ENCODE measurements at regions of chr19 and their contacts with region 1.

Region 1: DNA sequence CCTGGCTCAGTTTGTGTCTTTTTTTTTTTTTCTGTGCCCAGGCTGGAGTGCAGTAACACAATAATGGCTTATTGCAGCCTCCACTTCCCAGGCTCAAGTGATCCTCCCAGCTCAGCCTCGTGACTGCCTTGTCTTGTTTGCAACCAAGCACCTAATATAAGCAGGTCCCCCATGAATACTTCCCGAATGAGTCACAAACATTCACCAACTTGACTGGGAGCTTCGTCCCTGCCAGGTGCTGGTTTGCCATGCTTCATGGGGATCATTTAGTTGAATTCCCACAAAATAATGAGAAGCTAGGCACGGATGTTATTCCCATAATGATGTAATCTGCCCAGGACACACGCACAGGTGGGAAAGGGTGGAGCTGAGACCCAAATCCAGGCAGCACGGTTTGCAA is 176.5 kb downstream of the CACNA1A start:
- DNase-seq: no peak
- H3K4me3 Mint-ChIP-seq: no peak overlapping the region
- H3K27ac Mint-ChIP-seq: no peak overlapping the region
- H3K4me1 Mint-ChIP-seq: no peaks in the 10 kb centered on the region
- H3K27me3 Mint-ChIP-seq: peaks cover 43% of the 10 kb centered on the region
- CTCF ChIP-seq: no peak

Region 2: GRCh38 chr19:13132471-13133180 is 197.1 kb before region 1 on chr19:
- CTCF ChIA-PET with region 1: no interaction called
- intact Hi-C with region 1: no loop called
- DNase-seq: no peak
- H3K4me3 Mint-ChIP-seq: no peak overlapping the region
- H3K27ac Mint-ChIP-seq: no peak overlapping the region
- H3K4me1 Mint-ChIP-seq: peaks cover 5% of the 10 kb centered on the region
- H3K27me3 Mint-ChIP-seq: no peaks in the 10 kb centered on the region
- CTCF ChIP-seq: no peak

Region 3: DNA sequence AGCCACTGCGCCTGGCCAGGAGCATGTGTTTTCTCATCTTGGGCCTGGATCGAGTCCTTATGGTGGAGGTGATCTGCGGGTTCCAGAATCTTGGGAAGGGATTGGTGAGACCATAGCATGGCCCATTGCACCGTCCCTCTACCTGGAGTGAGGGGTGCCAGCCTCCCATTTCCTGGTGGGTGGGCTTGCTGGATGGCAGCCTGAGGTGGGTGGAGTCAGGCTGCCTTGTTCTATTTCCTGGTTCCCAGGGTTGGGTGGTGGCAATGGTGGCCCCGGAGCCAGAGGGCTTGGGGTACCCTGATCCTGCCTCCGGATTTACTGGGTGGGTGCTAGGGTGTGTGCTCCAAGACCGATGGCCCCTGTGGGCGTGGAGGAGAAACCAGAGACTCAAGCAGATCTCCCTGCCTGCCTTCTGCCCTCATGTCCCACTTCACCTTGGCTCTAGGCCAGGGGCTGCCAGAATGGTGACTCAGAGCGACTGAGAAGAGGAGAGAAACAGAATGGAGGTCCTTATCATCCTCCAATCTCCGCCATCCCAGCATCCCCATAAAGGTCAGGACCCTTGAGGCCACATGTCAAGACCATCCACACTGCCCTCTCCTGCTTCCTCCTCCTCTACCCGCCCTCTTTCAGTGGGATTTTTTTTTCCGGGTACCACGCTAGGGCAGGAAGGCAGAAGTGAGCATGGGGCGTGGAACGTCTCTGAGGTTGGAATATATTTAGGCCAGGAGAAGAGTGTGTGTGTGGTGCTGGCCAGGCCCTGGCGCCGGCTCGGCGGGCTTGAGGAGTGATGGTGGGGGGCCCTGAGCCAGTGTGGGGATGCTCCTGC is 157.5 kb before region 1 on chr19:
- CTCF ChIA-PET with region 1: no interaction called
- intact Hi-C with region 1: no loop called
- DNase-seq: peak; percentile 84
- H3K4me3 Mint-ChIP-seq: no peak overlapping the region
- H3K27ac Mint-ChIP-seq: peak overlapping the region; percentile 73
- H3K4me1 Mint-ChIP-seq: peaks cover 38% of the 10 kb centered on the region
- H3K27me3 Mint-ChIP-seq: no peaks in the 10 kb centered on the region
- CTCF ChIP-seq: no peak

Region 4: DNA sequence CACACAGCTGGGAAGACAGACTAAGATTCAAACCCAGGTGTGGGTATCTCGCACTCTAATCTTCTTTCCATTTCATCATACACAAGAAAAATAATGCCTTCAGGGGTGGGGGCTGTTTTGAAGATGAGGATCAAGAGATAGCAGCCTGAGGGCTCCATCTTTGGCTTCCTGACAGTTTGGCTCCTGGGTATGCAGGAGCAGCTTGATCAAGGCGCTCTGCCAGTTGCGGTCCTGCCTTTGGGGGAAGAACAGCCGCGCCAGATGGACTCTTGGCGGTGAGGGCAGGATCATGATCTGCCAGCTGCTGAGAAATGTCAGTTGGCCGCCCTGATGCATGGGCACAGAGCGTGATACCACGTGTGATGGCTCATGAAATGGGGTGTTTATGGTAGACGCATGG is 60.4 kb before region 1 on chr19:
- CTCF ChIA-PET with region 1: no interaction called
- intact Hi-C with region 1: no loop called
- DNase-seq: no peak
- H3K4me3 Mint-ChIP-seq: no peak overlapping the region
- H3K27ac Mint-ChIP-seq: no peak overlapping the region
- H3K4me1 Mint-ChIP-seq: peaks cover 3% of the 10 kb centered on the region
- H3K27me3 Mint-ChIP-seq: peaks cover 7% of the 10 kb centered on the region
- CTCF ChIP-seq: no peak

Region 5: GRCh38 chr19:13284929-13285928 is 44.5 kb before region 1 on chr19:
- CTCF ChIA-PET with region 1: no interaction called
- intact Hi-C with region 1: loop called (anchors 2 kb)
- DNase-seq: no peak
- H3K4me3 Mint-ChIP-seq: no peak overlapping the region
- H3K27ac Mint-ChIP-seq: no peak overlapping the region
- H3K4me1 Mint-ChIP-seq: no peaks in the 10 kb centered on the region
- H3K27me3 Mint-ChIP-seq: peaks cover 10% of the 10 kb centered on the region
- CTCF ChIP-seq: no peak

Region 6: DNA sequence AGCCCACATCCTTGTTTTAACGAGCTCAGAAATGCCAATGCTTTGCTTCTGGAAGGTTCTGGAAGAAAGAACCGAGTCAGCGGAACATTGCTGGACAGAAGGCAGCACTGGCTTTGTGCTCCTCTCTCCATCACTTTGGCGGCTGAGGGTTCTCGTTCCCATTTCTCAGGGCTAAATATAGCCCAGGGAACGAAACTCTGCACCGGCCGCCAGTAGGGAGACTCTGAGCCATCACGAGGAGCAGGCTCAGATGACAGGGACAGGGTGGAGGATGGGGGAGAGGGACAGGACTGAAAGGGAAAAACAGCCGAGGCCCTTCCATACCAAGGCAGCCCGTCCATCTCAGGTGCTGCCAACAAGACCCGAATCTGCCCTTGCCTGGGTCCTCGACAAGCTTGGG is 10.1 kb after region 1 on chr19:
- CTCF ChIA-PET with region 1: no interaction called
- intact Hi-C with region 1: no loop called
- DNase-seq: no peak
- H3K4me3 Mint-ChIP-seq: no peak overlapping the region
- H3K27ac Mint-ChIP-seq: no peak overlapping the region
- H3K4me1 Mint-ChIP-seq: no peaks in the 10 kb centered on the region
- H3K27me3 Mint-ChIP-seq: peaks cover 85% of the 10 kb centered on the region
- CTCF ChIP-seq: no peak

Measured in Calu3 (cell line).